GM12878 (cell line): ENCODE measurements at regions of chr19 and their contacts with region 1.

Region 1: GRCh38 chr19:28542394-28543243 is 670.3 kb downstream of the UQCRFS1 start:
- DNase-seq: no peak
- ATAC-seq: no peak; the same call in 2 of the 3 replicates
- H3K4me3 ChIP-seq: no peak overlapping the region
- H3K27ac ChIP-seq: no peak overlapping the region
- H3K4me1 ChIP-seq: no peaks in the 10 kb centered on the region
- H3K27me3 ChIP-seq: no peaks in the 10 kb centered on the region
- CTCF ChIP-seq: no peak
- EP300 ChIP-seq: no peak
- POLR2A ChIP-seq: no peak
- RAD21 ChIP-seq: no peak

Region 2: DNA sequence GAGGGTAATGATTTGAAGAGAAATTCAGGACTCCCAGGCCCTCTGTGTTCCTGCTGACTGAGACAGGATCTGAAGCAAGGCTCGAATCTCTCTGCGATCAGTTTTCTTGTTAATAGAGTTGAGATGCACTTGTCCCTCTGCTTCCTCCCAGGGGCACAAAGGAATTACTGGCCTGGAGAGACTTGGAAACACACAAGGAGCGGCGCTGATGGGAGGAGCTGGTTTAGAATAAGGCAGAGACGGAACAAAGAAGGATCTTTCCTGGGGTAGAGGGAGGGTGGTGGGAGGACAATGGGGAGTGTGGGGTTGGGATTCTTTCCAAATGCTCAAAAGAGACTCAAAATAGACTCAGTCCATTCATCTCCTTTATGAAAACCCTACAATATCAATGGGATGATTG is 48.7 kb before region 1 on chr19:
- CTCF ChIA-PET with region 1: interaction called, 5 read pairs
- POLR2A ChIA-PET with region 1: interaction called, 3 read pairs
- RAD21 ChIA-PET with region 1: interaction called, 21 read pairs
- SMC1A ChIA-PET with region 1: interaction called, 6 read pairs
- in situ Hi-C with region 1: no loop called
- intact Hi-C with region 1: no loop called
- DNase-seq: no peak
- ATAC-seq: no peak
- H3K4me3 ChIP-seq: no peak overlapping the region
- H3K27ac ChIP-seq: no peak overlapping the region
- H3K4me1 ChIP-seq: no peaks in the 10 kb centered on the region
- H3K27me3 ChIP-seq: no peaks in the 10 kb centered on the region
- CTCF ChIP-seq: no peak
- EP300 ChIP-seq: no peak
- POLR2A ChIP-seq: no peak
- RAD21 ChIP-seq: no peak

Region 3: DNA sequence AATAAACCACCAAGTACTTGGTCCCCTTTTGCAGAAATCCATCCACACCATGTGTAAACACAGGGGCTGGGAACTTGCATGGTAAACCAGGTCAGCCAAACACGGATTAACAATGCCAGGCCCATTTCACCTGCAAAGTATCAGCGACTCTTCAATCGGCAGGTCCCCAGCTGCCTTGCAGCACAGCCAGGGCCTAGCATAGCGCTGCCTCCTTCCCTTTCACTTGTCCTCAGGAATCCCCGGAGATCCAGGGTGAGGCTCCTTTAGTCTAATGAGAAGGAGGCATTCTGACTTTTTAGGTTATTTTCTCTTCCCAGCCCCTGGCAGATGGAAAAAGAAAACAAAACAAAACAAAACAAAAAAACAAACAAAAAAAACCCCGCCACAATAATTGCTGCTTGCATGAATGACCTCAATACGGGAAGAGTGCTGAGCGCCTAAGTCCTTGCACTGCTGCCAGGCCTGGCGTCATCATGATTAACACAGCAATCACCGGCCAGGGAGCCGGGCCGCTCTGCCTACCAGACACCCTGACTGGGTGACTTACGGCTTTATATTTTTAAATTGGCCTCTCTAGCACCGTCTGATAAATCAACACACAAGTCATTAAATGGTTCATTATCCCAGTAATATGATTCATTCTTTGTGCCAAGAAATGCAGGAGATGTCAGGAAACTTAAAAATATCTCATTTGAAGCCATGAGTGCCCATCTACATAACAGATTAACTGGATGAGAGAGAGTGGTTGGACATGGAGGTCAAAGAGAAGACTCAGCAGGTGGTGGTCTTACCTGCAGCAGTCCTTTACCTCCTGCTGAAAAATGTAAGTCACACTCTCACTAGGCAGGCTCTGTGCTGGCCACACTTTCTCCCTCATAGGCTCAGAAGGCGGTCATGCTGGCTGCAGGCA is 22.4 kb before region 1 on chr19:
- CTCF ChIA-PET with region 1: interaction called, 5 read pairs
- POLR2A ChIA-PET with region 1: interaction called, 6 read pairs
- RAD21 ChIA-PET with region 1: interaction called, 22 read pairs
- SMC1A ChIA-PET with region 1: interaction called, 19 read pairs
- in situ Hi-C with region 1: no loop called
- intact Hi-C with region 1: no loop called
- DNase-seq: no peak
- ATAC-seq: no peak
- H3K4me3 ChIP-seq: no peak overlapping the region
- H3K27ac ChIP-seq: no peak overlapping the region
- H3K4me1 ChIP-seq: no peaks in the 10 kb centered on the region
- H3K27me3 ChIP-seq: no peaks in the 10 kb centered on the region
- CTCF ChIP-seq: no peak
- EP300 ChIP-seq: no peak
- POLR2A ChIP-seq: no peak
- RAD21 ChIP-seq: no peak

Region 4: DNA sequence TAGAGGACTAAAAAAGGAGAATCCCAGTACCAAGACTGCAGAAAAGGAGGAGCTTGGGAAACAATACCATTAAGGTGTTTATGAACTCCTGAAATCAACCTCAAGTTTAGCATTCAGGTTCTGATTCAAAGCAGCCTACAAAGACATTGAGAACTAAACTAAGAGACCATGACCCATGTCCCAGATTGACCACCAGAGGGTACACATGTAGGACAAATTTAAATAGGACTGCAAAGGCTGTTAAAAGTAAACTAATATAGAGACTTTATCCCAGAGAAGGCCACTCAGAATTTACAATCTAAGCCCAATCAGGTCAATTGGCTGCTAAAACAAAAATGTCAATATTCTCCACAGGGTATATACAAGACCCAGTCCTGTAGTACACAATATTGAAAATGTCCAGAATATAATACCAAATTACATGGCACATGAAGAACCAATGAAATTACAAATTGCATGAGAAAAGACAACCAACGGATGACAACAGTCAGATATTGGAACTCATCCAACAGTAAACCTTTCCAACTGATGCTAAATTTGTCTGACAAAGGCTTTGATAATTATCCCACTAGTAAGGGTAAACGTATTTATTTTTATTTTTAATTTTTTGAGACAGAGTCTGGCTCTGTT is 12.1 kb before region 1 on chr19:
- CTCF ChIA-PET with region 1: interaction called, 5 read pairs
- POLR2A ChIA-PET with region 1: interaction called, 8 read pairs
- RAD21 ChIA-PET with region 1: interaction called, 16 read pairs
- SMC1A ChIA-PET with region 1: interaction called, 20 read pairs
- in situ Hi-C with region 1: no loop called
- intact Hi-C with region 1: no loop called
- DNase-seq: no peak
- ATAC-seq: no peak
- H3K4me3 ChIP-seq: no peak overlapping the region
- H3K27ac ChIP-seq: no peak overlapping the region
- H3K4me1 ChIP-seq: no peaks in the 10 kb centered on the region
- H3K27me3 ChIP-seq: no peaks in the 10 kb centered on the region
- CTCF ChIP-seq: no peak
- EP300 ChIP-seq: no peak
- POLR2A ChIP-seq: no peak
- RAD21 ChIP-seq: no peak

Region 5: GRCh38 chr19:28596561-28597071 is 54.0 kb after region 1 on chr19:
- CTCF ChIA-PET with region 1: interaction called, 8 read pairs
- POLR2A ChIA-PET with region 1: interaction called, 4 read pairs
- RAD21 ChIA-PET with region 1: interaction called, 20 read pairs
- SMC1A ChIA-PET with region 1: interaction called, 10 read pairs
- in situ Hi-C with region 1: no loop called
- intact Hi-C with region 1: no loop called
- DNase-seq: no peak
- ATAC-seq: no peak
- H3K4me3 ChIP-seq: no peak overlapping the region
- H3K27ac ChIP-seq: no peak overlapping the region
- H3K4me1 ChIP-seq: no peaks in the 10 kb centered on the region
- H3K27me3 ChIP-seq: no peaks in the 10 kb centered on the region
- CTCF ChIP-seq: no peak
- EP300 ChIP-seq: no peak
- POLR2A ChIP-seq: no peak
- RAD21 ChIP-seq: no peak

Region 6: GRCh38 chr19:28606269-28607032 is 63.8 kb after region 1 on chr19:
- CTCF ChIA-PET with region 1: interaction called, 5 read pairs
- POLR2A ChIA-PET with region 1: interaction called, 10 read pairs
- RAD21 ChIA-PET with region 1: interaction called, 17 read pairs
- SMC1A ChIA-PET with region 1: interaction called, 14 read pairs
- in situ Hi-C with region 1: no loop called
- intact Hi-C with region 1: no loop called
- DNase-seq: no peak
- ATAC-seq: no peak
- H3K4me3 ChIP-seq: no peak overlapping the region
- H3K27ac ChIP-seq: no peak overlapping the region
- H3K4me1 ChIP-seq: no peaks in the 10 kb centered on the region
- H3K27me3 ChIP-seq: no peaks in the 10 kb centered on the region
- CTCF ChIP-seq: no peak
- EP300 ChIP-seq: no peak
- POLR2A ChIP-seq: no peak
- RAD21 ChIP-seq: no peak

Region 7: DNA sequence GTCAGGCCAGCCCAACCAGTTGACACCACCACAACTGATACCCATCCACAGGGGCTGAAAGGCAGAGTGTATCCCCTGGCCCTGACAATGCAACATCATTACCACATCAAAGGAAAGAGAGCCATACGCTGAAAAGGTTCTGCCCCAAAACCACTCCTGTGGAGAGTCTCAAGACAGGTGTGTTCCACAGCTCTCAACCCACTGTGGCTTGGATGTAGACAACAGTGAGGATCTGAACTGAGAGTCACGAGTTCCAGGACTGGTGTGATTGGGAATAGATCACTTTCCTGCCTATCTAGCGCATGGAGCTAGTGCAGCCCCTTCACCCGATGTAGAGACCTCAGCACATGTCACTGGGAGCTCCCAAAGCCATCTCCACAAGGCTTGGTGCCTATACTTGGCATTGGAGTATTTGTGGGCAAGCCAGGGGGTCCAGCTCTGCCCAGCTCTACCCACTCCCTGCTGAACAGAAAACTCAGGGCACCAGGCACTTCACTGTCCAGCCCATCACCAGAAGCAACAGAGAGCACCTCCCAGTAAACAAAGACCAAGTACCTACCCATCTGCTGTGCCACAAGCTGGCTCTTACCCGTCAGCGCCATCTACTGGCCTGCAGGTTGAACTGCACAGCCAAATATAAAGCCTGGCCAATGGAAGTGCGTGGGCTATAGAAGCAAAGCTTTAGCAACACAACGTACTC is 90.8 kb after region 1 on chr19:
- CTCF ChIA-PET with region 1: interaction called, 8 read pairs
- POLR2A ChIA-PET with region 1: no interaction called
- RAD21 ChIA-PET with region 1: interaction called, 9 read pairs
- SMC1A ChIA-PET with region 1: interaction called, 14 read pairs
- in situ Hi-C with region 1: no loop called
- intact Hi-C with region 1: no loop called
- DNase-seq: no peak
- ATAC-seq: peak; percentile 20; the same call in 1 of the 3 replicates
- H3K4me3 ChIP-seq: no peak overlapping the region
- H3K27ac ChIP-seq: no peak overlapping the region
- H3K4me1 ChIP-seq: no peaks in the 10 kb centered on the region
- H3K27me3 ChIP-seq: no peaks in the 10 kb centered on the region
- CTCF ChIP-seq: peak; percentile 52 to 63 (median 53); a peak in 5 of 6 replicates
- EP300 ChIP-seq: no peak
- POLR2A ChIP-seq: no peak
- RAD21 ChIP-seq: peak; percentile 51